Pancreas (tissue), 10 donors: ENCODE measurements at regions of chr12 and their contacts with region 1.

Region 1: DNA sequence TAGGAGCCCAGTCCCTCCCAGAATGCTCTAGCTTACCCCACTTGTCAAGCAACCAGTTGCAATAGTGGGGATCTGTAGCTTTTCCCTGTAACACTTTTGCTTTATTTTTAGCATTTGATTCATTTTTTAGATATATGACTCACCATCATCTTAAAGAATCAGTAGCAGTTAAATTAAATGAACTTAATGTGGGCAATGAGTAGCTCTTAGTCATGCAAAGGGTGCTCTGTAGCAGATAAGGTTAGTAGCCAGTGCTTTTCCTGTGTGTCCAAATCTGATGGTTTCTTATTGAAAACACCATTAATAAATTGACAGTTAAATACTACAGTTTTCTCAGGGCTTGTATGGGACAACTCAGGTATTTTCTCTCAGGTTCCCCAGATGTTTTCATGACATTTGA is 311.8 kb downstream of the RERGL start:
- DNase-seq: no peak
- ATAC-seq: no peak
- H3K4me3 ChIP-seq: no peak overlapping the region
- H3K27ac ChIP-seq: no peak overlapping the region
- H3K4me1 ChIP-seq: no peaks in the 10 kb centered on the region
- H3K27me3 ChIP-seq: no peaks in the 10 kb centered on the region
- CTCF ChIP-seq: no peak

Region 2: DNA sequence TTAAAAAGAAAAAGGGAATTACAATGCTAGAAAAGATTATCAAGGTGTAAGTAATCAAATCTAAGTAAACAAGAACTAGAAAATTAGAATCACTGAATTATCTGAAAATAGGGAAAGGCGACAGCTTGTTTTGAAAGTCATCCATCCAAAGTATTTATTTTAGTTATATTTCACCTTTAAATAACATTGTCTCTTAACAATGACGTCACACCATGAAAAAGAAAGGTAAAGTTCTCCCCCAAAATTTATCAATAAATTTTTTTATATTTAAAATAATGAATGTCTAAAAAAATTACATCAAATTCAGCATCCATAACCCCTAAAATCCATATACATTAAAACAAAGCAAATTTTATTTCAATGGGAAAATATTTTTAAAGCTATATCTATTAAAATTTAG is 88.6 kb after region 1 on chr12:
- intact Hi-C with region 1: loop called (anchors 5 kb)
- DNase-seq: no peak
- ATAC-seq: no peak
- H3K4me3 ChIP-seq: no peak overlapping the region
- H3K27ac ChIP-seq: no peak overlapping the region
- H3K4me1 ChIP-seq: no peaks in the 10 kb centered on the region
- H3K27me3 ChIP-seq: no peaks in the 10 kb centered on the region
- CTCF ChIP-seq: no peak